ENCODE measurements at regions of chr5 and their contacts with region 1.

Region 1: GRCh38 chr5:40879163-40879942 is 29.9 kb upstream of the C7 start:
- DNase-seq: no peak
- ATAC-seq: peak in 1 of 2 donors; percentile 30
- H3K4me3 ChIP-seq: no peak overlapping the region
- H3K27ac ChIP-seq: no peak overlapping the region
- H3K4me1 ChIP-seq: peaks cover 0 to 4% of the 10 kb centered on the region in 2 donors
- H3K27me3 ChIP-seq: no peaks in the 10 kb centered on the region
- CTCF ChIP-seq: peak; percentile 37 to 62 (median 40)
- POLR2A ChIP-seq: no peak

Region 2: DNA sequence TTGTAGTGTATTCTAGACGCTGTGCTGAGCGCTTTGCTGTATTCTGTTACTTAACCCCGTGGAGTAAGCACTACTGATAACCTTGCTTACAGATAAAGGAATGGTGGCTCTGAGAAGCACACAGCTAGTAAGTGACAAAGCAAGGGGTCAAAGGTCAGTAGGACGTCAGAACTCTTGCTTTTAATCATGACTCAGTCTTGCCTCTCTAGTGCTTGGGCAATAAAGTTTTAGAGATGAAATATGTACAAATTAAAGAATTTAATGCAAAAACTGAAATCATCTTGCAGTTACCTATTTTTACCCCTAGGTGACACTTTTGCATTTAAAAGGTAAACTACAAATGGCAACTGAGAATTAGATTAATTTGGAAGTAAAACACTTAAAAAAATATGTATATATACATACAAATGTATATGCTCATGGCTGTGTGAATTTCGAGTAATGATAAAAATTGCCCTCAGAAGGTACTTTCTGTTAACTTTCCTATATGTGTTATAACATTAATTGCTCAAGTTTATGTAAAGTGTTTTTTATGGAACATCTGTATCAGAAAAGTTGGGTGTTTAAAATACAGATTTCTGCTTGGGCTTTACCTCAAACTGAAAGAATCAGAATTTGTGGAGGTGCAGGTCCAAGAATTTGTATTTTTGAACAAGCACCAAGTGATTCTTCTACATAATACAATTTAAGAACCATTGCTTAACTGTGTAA is 1279.5 kb before region 1 on chr5:
- in situ Hi-C with region 1: loop called in 3 of 4 experiments (anchors 25 kb)
- intact Hi-C with region 1: no loop called
- DNase-seq: no peak
- ATAC-seq: no peak
- H3K4me3 ChIP-seq: no peak overlapping the region
- H3K27ac ChIP-seq: no peak overlapping the region
- H3K4me1 ChIP-seq: no peaks in the 10 kb centered on the region
- H3K27me3 ChIP-seq: no peaks in the 10 kb centered on the region
- CTCF ChIP-seq: peak in 3 of 5 experiments; percentile 31 to 50 (median 45)
- POLR2A ChIP-seq: no peak

Region 3: GRCh38 chr5:39714036-39714698 is 1165.2 kb before region 1 on chr5:
- in situ Hi-C with region 1: loop called in 1 of 4 experiments (anchors 25 kb)
- intact Hi-C with region 1: no loop called
- DNase-seq: peak in 1 of 2 donors; percentile 18
- ATAC-seq: peak; percentile 52 to 64
- H3K4me3 ChIP-seq: no peak overlapping the region
- H3K27ac ChIP-seq: peak overlapping the region; percentile 27 to 52 (median 48)
- H3K4me1 ChIP-seq: peaks cover 21 to 28% of the 10 kb centered on the region in 2 donors
- H3K27me3 ChIP-seq: no peaks in the 10 kb centered on the region
- CTCF ChIP-seq: peak in 4 of 5 experiments; percentile 44 to 65 (median 60)
- POLR2A ChIP-seq: no peak